OCI-LY7 (cell line): ENCODE measurements at regions of chr4 and their contacts with region 1.

Region 1: GRCh38 chr4:73653695-73654106 is 33.5 kb upstream of the RASSF6 start:
- DNase-seq: peak; percentile 90
- H3K4me3 ChIP-seq: no peak overlapping the region
- H3K27ac ChIP-seq: peak overlapping the region; percentile 74
- H3K4me1 ChIP-seq: peaks cover 50% of the 10 kb centered on the region
- CTCF ChIP-seq: peak; percentile 90

Region 2: DNA sequence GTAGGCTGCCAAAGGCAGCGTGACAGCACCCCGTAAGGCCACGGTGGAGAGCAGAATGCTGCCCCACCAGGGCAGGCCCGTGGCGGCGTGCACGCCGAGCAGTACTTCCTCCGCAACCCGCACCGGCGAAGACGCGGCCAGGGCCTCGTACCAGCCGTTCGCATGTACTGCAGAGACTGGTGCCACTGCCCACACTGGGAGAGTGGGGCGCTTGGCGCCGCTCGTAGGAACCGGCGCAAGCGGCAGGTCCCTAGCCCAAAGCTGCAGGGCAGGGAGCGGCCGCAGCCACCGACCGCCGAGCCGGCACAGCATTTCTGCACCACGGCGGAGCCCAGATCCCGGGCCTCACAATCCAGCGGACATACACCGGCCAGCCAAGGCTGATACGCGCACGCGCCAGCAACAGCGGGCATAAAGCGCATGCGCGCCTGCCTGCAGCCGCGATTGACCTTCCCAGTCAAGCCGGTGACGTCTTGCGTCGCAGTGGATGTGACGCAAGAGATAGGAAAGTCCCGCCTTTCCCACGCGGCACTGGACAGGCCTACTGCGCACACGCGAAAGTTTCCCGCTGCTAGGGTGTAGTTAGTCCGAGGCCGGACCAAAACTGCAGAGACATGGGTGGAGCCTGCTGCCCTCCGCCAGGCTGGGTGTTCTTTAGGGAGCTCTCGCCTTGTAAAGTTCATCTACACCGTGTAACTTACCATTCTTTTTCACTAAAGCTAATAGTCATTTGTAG is 584.2 kb before region 1 on chr4 and contains the start of gene COX18:
- CTCF ChIA-PET with region 1: no interaction called
- POLR2A ChIA-PET with region 1: no interaction called
- intact Hi-C with region 1: loop called (anchors 10 kb)
- DNase-seq: peak; percentile 99
- H3K4me3 ChIP-seq: peak within 1 kb of the TSS; percentile 81
- H3K27ac ChIP-seq: peak within 1 kb of the TSS; percentile 93
- H3K4me1 ChIP-seq: peaks cover 15% of the 10 kb centered on the region
- CTCF ChIP-seq: 0 out of 2 replicates have a peak, but pooled peaks have one; percentile 22
- total RNA-seq, gene COX18: 14.3 and 16.9 TPM in 2 replicates

Region 3: GRCh38 chr4:73311428-73311827 is 342.3 kb before region 1 on chr4:
- CTCF ChIA-PET with region 1: no interaction called
- POLR2A ChIA-PET with region 1: no interaction called
- intact Hi-C with region 1: loop called (anchors 5 kb)
- DNase-seq: peak; percentile 48
- H3K4me3 ChIP-seq: no peak overlapping the region
- H3K27ac ChIP-seq: no peak overlapping the region
- H3K4me1 ChIP-seq: peaks cover 3% of the 10 kb centered on the region
- CTCF ChIP-seq: peak; percentile 85

Region 4: DNA sequence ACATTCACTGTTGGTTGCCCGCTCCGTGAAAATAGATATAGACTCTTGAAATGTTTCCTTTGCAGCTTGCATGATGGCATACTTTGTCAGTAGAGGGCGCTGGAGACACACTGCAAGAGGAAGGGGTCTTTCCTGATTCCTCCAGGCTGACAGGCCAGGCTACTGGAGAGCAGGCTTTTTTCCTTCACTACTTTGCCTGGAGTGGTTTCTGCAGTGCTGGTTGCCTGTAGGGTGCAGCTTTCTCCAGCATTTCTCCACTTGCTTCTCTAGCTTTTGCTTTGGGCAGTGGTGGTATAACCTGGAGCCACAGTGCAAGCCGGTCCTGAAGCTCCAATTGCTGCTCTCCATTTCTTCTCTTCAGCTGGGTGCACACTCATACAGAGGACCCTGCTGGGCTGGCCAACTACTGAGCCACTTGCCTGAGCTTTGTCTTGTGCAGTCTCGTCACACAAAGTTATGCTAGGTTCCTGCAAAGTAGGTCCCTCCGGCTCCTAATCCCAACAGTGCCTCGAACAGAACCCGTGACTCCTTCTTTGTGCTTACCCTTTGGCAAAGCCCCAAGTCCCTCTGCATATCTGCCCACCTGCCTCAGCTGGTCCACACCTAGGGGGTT is 79.8 kb before region 1 on chr4:
- CTCF ChIA-PET with region 1: interaction called, 35 read pairs
- POLR2A ChIA-PET with region 1: interaction called, 41 read pairs
- intact Hi-C with region 1: loop called (anchors 1 kb)
- DNase-seq: peak; percentile 86
- H3K4me3 ChIP-seq: no peak overlapping the region
- H3K27ac ChIP-seq: peak overlapping the region; percentile 54
- H3K4me1 ChIP-seq: peaks cover 20% of the 10 kb centered on the region
- CTCF ChIP-seq: peak; percentile 99

Region 5: GRCh38 chr4:73583666-73584065 is 70.0 kb before region 1 on chr4:
- CTCF ChIA-PET with region 1: no interaction called
- POLR2A ChIA-PET with region 1: interaction called, 16 read pairs
- intact Hi-C with region 1: no loop called
- DNase-seq: no peak
- H3K4me3 ChIP-seq: no peak overlapping the region
- H3K27ac ChIP-seq: peak overlapping the region; percentile 3
- H3K4me1 ChIP-seq: peaks cover 24% of the 10 kb centered on the region
- CTCF ChIP-seq: no peak

Region 6: GRCh38 chr4:73593631-73594241 is 60.0 kb before region 1 on chr4:
- CTCF ChIA-PET with region 1: interaction called, 23 read pairs
- POLR2A ChIA-PET with region 1: interaction called, 17 read pairs
- intact Hi-C with region 1: loop called (anchors 1 kb)
- DNase-seq: peak; percentile 61
- H3K4me3 ChIP-seq: no peak overlapping the region
- H3K27ac ChIP-seq: peak overlapping the region; percentile 100
- H3K4me1 ChIP-seq: peaks cover 97% of the 10 kb centered on the region
- CTCF ChIP-seq: peak; percentile 97

Region 7: DNA sequence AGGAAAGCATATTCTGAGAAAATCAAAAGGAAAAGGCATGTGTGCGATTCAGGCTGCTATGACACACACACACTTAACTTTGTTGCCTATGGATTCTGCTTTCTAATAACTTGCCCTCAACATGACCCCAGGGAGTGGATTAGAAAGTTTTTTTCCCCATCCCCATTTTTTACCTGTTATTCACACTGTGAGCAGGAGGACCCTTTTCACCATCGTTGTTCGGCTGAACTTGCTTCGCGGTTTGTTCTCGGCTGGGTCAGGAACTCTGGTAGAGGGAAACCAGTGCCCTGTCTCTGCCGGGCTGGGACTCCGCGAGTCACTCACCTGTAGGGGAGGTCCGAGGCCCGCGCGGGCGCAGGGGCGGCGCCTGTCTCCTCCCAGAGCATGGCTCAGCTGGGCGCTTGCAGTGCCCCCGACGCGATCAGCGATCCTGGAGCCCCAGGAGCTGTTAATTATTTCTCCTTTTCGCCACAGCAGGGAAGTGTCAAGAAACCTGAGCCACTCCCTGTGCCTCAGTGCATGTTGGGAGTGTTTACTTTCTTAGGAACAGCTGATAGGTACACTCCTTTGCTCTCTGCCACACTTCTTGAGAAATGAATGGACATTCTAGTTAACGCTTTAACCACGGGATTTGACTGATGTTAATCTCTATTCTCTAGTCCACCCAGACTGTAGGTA is 33.4 kb before region 1 on chr4 and contains the start of gene RASSF6:
- CTCF ChIA-PET with region 1: interaction called, 5 read pairs
- POLR2A ChIA-PET with region 1: interaction called, 12 read pairs
- intact Hi-C with region 1: loop called (anchors 2 kb)
- DNase-seq: peak; percentile 86
- H3K4me3 ChIP-seq: peak within 1 kb of the TSS; percentile 85
- H3K27ac ChIP-seq: peak within 1 kb of the TSS; percentile 100
- H3K4me1 ChIP-seq: peaks cover 54% of the 10 kb centered on the region
- CTCF ChIP-seq: peak; percentile 45; the same call in 1 of the 2 replicates
- total RNA-seq, gene RASSF6: 32.5 and 48.3 TPM in 2 replicates

Region 8: DNA sequence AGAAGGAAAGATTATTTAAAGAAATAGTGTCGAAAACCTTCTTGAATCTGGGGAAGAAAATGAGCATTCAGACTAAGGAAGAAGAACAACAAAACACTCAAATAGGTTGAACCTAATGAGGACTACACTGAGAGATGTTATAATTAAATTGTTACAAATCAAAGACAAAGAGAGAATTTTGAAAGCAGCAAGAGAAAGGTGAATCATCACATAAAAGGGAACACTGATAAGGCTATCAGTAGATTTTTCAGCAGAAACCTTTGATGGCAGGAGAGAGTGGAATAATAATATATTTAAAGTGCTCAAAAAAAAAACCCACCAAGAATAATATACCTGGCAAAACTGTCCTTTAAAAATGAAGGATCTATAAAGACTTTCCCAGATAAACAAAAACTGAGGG is 906.2 kb after region 1 on chr4:
- CTCF ChIA-PET with region 1: no interaction called
- POLR2A ChIA-PET with region 1: no interaction called
- intact Hi-C with region 1: no loop called
- DNase-seq: no peak
- H3K4me3 ChIP-seq: no peak overlapping the region
- H3K27ac ChIP-seq: no peak overlapping the region
- H3K4me1 ChIP-seq: no peaks in the 10 kb centered on the region
- CTCF ChIP-seq: no peak